B cell (primary cell): ENCODE measurements at regions of chr20 and their contacts with region 1.

Region 1: DNA sequence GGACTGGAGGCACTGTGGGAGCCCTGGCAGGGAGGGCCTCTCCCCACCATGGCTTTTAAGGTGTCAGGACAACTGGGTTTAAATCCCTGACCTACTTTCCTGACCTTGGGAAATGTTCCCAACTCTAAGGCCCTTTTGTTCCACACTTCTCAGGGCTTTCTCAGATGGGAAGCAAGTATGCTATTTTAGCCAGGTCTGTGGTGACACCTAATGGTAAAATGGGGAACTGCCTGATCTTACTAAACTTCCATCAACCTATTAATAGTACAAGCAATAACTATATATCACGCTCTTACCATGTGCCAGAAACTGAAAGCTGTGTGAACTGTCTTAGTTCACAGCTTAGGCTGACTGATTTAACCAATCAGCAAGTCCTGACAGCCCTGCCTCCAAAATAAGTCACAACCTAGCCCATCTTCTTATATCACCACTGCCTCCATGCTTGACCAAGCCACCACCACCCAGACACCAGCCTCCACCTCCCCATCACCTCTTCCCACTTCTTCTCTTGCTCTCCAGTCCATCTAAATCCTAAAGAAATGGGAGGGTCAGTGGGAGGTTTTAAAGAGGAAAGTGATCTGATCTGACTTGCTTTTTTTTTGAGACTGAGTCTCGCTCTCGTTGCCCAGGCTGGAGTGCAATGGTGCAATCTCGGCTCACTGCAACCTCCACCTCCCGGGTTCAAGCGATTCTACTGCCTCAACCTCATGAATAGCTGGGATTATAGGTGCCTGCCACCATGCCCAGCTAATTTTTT is 6.9 kb upstream of the BLCAP start:
- DNase-seq: peak; percentile 91
- ATAC-seq: peak; percentile 98
- H3K4me3 ChIP-seq: no peak overlapping the region
- H3K4me3 Mint-ChIP-seq: no peak overlapping the region
- H3K27ac ChIP-seq: peak overlapping the region; percentile 2 to 71
- H3K27ac Mint-ChIP-seq: peak overlapping the region; percentile 87
- H3K4me1 ChIP-seq: peaks cover 4 to 5% of the 10 kb centered on the region in 2 donors
- H3K4me1 Mint-ChIP-seq: peaks cover 12% of the 10 kb centered on the region
- H3K27me3 ChIP-seq: no peaks in the 10 kb centered on the region
- H3K27me3 Mint-ChIP-seq: peaks cover 12% of the 10 kb centered on the region
- CTCF ChIP-seq: peak; percentile 84

Region 2: DNA sequence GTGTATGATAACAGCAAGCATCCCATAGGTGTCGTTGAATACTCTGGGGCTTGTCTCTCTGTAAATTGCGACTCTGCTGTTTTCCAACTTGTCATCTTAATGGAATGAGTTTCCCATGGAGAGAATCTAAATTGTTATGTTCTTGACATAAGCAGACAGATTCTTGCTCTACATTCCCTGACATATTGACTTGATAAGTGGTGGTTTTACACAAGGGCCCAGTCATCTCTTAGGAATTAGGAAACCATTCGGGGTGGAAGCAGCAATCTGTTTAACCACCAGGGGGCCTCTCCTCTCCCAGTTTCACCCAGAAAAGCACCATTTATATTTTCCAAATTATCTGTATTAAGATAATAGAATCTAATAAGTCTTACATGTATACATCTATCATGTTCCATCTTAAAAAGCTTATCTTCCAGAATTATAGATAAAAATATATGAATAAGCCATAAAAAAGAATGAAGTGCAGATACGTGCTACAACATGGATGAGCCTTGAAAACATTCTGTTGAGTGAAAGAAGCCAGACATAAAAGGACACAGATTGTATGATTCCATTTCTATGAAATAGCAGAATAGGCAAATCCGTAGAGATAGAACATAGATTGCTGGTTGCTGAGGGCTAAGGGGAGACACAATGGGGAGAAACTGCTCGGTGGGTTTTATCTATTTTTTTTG is 332.2 kb before region 1 on chr20:
- CTCF ChIA-PET with region 1: interaction called, 307 read pairs
- POLR2A ChIA-PET with region 1: interaction called, 6 read pairs
- intact Hi-C with region 1: loop called (anchors 1 kb)
- DNase-seq: peak; percentile 56
- ATAC-seq: peak; percentile 58
- H3K4me3 ChIP-seq: no peak overlapping the region
- H3K4me3 Mint-ChIP-seq: no peak overlapping the region
- H3K27ac ChIP-seq: no peak overlapping the region
- H3K27ac Mint-ChIP-seq: no peak overlapping the region
- H3K4me1 ChIP-seq: no peaks in the 10 kb centered on the region
- H3K4me1 Mint-ChIP-seq: no peaks in the 10 kb centered on the region
- H3K27me3 ChIP-seq: no peaks in the 10 kb centered on the region
- H3K27me3 Mint-ChIP-seq: no peaks in the 10 kb centered on the region
- CTCF ChIP-seq: peak; percentile 85

Region 3: GRCh38 chr20:37270576-37271420 is 263.8 kb before region 1 on chr20:
- CTCF ChIA-PET with region 1: interaction called, 161 read pairs
- POLR2A ChIA-PET with region 1: interaction called, 7 read pairs
- intact Hi-C with region 1: loop called (anchors 1 kb)
- DNase-seq: peak; percentile 75
- ATAC-seq: peak; percentile 60
- H3K4me3 ChIP-seq: no peak overlapping the region
- H3K4me3 Mint-ChIP-seq: no peak overlapping the region
- H3K27ac ChIP-seq: peak overlapping the region; percentile 49 to 71
- H3K27ac Mint-ChIP-seq: peak overlapping the region; percentile 57
- H3K4me1 ChIP-seq: peaks cover 42 to 46% of the 10 kb centered on the region in 2 donors
- H3K4me1 Mint-ChIP-seq: peaks cover 43% of the 10 kb centered on the region
- H3K27me3 ChIP-seq: no peaks in the 10 kb centered on the region
- H3K27me3 Mint-ChIP-seq: no peaks in the 10 kb centered on the region
- CTCF ChIP-seq: no peak